CD4-positive, alpha-beta T cell (primary cell): ENCODE measurements at regions of chr6 and their contacts with region 1.

Region 1: GRCh38 chr6:28136585-28137504 is 4.8 kb upstream of the ZKSCAN8 start:
- DNase-seq: peak; percentile 47 to 87 (median 68)
- ATAC-seq: peak; percentile 42
- H3K4me3 ChIP-seq: peak overlapping the region; percentile 79
- H3K4me3 Mint-ChIP-seq: peak overlapping the region; percentile 95
- H3K27ac ChIP-seq: peak overlapping the region; percentile 93 to 99
- H3K27ac Mint-ChIP-seq: peak overlapping the region; percentile 95
- H3K4me1 ChIP-seq: peaks cover 37% of the 10 kb centered on the region
- H3K4me1 Mint-ChIP-seq: peaks cover 76% of the 10 kb centered on the region
- H3K27me3 ChIP-seq: no peaks in the 10 kb centered on the region
- H3K27me3 Mint-ChIP-seq: no peaks in the 10 kb centered on the region
- CTCF ChIP-seq: no peak

Region 2: GRCh38 chr6:27177485-27178406 is 959.1 kb before region 1 on chr6:
- CTCF ChIA-PET with region 1: no interaction called
- POLR2A ChIA-PET with region 1: no interaction called
- intact Hi-C with region 1: no loop called
- DNase-seq: peak; percentile 44 to 90 (median 64)
- ATAC-seq: peak; percentile 64
- H3K4me3 ChIP-seq: peak overlapping the region; percentile 89
- H3K4me3 Mint-ChIP-seq: peak overlapping the region; percentile 99
- H3K27ac ChIP-seq: peak overlapping the region; percentile 27 to 63
- H3K27ac Mint-ChIP-seq: peak overlapping the region; percentile 100
- H3K4me1 ChIP-seq: peaks cover 21% of the 10 kb centered on the region
- H3K4me1 Mint-ChIP-seq: peaks cover 24% of the 10 kb centered on the region
- H3K27me3 ChIP-seq: no peaks in the 10 kb centered on the region
- H3K27me3 Mint-ChIP-seq: peaks cover 24% of the 10 kb centered on the region
- CTCF ChIP-seq: peak; percentile 54

Region 3: GRCh38 chr6:28104392-28105244 is 32.2 kb before region 1 on chr6:
- CTCF ChIA-PET with region 1: interaction called, 11 read pairs
- POLR2A ChIA-PET with region 1: interaction called, 55 read pairs
- intact Hi-C with region 1: loop called (anchors 2 kb)
- DNase-seq: peak; percentile 69 to 92 (median 82)
- ATAC-seq: peak; percentile 98
- H3K4me3 ChIP-seq: peak overlapping the region; percentile 74
- H3K4me3 Mint-ChIP-seq: peak overlapping the region; percentile 94
- H3K27ac ChIP-seq: peak overlapping the region; percentile 63 to 78
- H3K27ac Mint-ChIP-seq: peak overlapping the region; percentile 91
- H3K4me1 ChIP-seq: peaks cover 10% of the 10 kb centered on the region
- H3K4me1 Mint-ChIP-seq: peaks cover 13% of the 10 kb centered on the region
- H3K27me3 ChIP-seq: no peaks in the 10 kb centered on the region
- H3K27me3 Mint-ChIP-seq: peaks cover under 1% of the 10 kb centered on the region
- CTCF ChIP-seq: peak; percentile 62

Region 4: DNA sequence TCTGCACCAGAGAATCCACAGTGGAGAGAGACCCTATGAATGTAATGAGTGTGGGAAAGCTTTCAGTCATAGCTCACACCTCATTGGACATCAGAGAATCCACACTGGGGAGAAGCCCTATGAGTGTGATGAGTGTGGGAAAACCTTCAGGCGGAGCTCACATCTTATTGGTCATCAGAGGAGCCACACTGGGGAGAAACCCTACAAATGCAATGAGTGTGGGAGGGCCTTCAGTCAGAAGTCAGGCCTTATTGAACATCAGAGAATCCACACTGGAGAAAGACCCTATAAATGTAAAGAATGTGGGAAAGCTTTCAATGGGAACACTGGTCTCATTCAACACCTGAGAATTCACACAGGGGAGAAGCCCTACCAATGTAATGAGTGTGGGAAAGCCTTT is 16.7 kb after region 1 on chr6:
- CTCF ChIA-PET with region 1: no interaction called
- POLR2A ChIA-PET with region 1: interaction called, 12 read pairs
- intact Hi-C with region 1: no loop called
- DNase-seq: no peak
- ATAC-seq: no peak
- H3K4me3 ChIP-seq: no peak overlapping the region
- H3K4me3 Mint-ChIP-seq: no peak overlapping the region
- H3K27ac ChIP-seq: no peak overlapping the region
- H3K27ac Mint-ChIP-seq: no peak overlapping the region
- H3K4me1 ChIP-seq: no peaks in the 10 kb centered on the region
- H3K4me1 Mint-ChIP-seq: peaks cover 5% of the 10 kb centered on the region
- H3K27me3 ChIP-seq: no peaks in the 10 kb centered on the region
- H3K27me3 Mint-ChIP-seq: no peaks in the 10 kb centered on the region
- CTCF ChIP-seq: no peak

Region 5: GRCh38 chr6:28182255-28182654 is 45.4 kb after region 1 on chr6:
- CTCF ChIA-PET with region 1: no interaction called
- POLR2A ChIA-PET with region 1: no interaction called
- intact Hi-C with region 1: no loop called
- DNase-seq: no peak
- ATAC-seq: no peak
- H3K4me3 ChIP-seq: no peak overlapping the region
- H3K4me3 Mint-ChIP-seq: no peak overlapping the region
- H3K27ac ChIP-seq: no peak overlapping the region
- H3K27ac Mint-ChIP-seq: no peak overlapping the region
- H3K4me1 ChIP-seq: no peaks in the 10 kb centered on the region
- H3K4me1 Mint-ChIP-seq: no peaks in the 10 kb centered on the region
- H3K27me3 ChIP-seq: peaks cover 0 to 16% of the 10 kb centered on the region in 2 experiments
- H3K27me3 Mint-ChIP-seq: peaks cover 33% of the 10 kb centered on the region
- CTCF ChIP-seq: no peak

Region 6: DNA sequence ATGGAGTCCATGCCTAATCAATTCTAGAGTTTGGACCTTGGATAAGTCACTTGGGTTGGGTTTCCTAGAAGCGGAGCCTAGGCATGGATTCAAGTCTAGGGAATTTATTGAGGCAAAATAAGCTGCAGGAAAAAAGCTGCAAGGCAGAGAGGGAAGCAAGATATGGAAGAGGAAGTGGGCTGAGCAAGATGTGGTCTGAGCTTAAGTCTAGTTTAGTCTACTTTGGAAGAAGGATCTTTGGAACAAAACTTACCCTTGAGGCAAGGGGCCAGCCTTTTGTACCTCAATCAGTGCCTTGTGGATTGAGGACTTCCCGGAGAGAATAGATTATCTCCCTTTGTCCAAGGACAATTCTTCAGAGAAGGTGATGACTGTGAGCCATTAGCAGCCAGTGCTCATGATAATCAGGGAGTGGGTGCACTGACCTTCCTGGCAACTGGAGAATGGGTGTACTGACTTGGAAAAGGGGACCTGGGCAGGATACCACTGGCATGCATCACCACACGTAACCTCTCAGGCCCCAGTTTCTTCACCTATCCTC is 99.1 kb after region 1 on chr6:
- CTCF ChIA-PET with region 1: no interaction called
- POLR2A ChIA-PET with region 1: no interaction called
- intact Hi-C with region 1: no loop called
- DNase-seq: no peak
- ATAC-seq: no peak
- H3K4me3 ChIP-seq: no peak overlapping the region
- H3K4me3 Mint-ChIP-seq: no peak overlapping the region
- H3K27ac ChIP-seq: no peak overlapping the region
- H3K27ac Mint-ChIP-seq: no peak overlapping the region
- H3K4me1 ChIP-seq: no peaks in the 10 kb centered on the region
- H3K4me1 Mint-ChIP-seq: no peaks in the 10 kb centered on the region
- H3K27me3 ChIP-seq: no peaks in the 10 kb centered on the region
- H3K27me3 Mint-ChIP-seq: peaks cover 18% of the 10 kb centered on the region
- CTCF ChIP-seq: no peak

Region 7: GRCh38 chr6:28266962-28267694 is 130.3 kb after region 1 on chr6 and contains the start of gene ZSCAN26:
- CTCF ChIA-PET with region 1: no interaction called
- POLR2A ChIA-PET with region 1: interaction called, 33 read pairs
- intact Hi-C with region 1: loop called in 1 of 2 experiments (anchors 5 kb)
- DNase-seq: peak; percentile 78 to 93 (median 85)
- ATAC-seq: peak; percentile 95
- H3K4me3 ChIP-seq: peak within 1 kb of the TSS; percentile 70
- H3K4me3 Mint-ChIP-seq: no peak within 1 kb of the TSS
- H3K27ac ChIP-seq: peak within 1 kb of the TSS; percentile 51 to 80
- H3K27ac Mint-ChIP-seq: no peak within 1 kb of the TSS
- H3K4me1 ChIP-seq: peaks cover 8% of the 10 kb centered on the region
- H3K4me1 Mint-ChIP-seq: peaks cover 19% of the 10 kb centered on the region
- H3K27me3 ChIP-seq: no peaks in the 10 kb centered on the region
- H3K27me3 Mint-ChIP-seq: peaks cover 2% of the 10 kb centered on the region
- CTCF ChIP-seq: no peak
- total RNA-seq, gene ZSCAN26: 6.2 to 8.0 TPM

Region 8: GRCh38 chr6:28355743-28356665 is 219.2 kb after region 1 on chr6:
- CTCF ChIA-PET with region 1: interaction called, 18 read pairs
- POLR2A ChIA-PET with region 1: interaction called, 15 read pairs
- intact Hi-C with region 1: loop called (anchors 1 to 2 kb)
- DNase-seq: peak; percentile 26 to 84 (median 42)
- ATAC-seq: peak; percentile 93
- H3K4me3 ChIP-seq: peak overlapping the region; percentile 64
- H3K4me3 Mint-ChIP-seq: peak overlapping the region; percentile 90
- H3K27ac ChIP-seq: no peak overlapping the region
- H3K27ac Mint-ChIP-seq: peak overlapping the region; percentile 22
- H3K4me1 ChIP-seq: peaks cover 21% of the 10 kb centered on the region
- H3K4me1 Mint-ChIP-seq: peaks cover 42% of the 10 kb centered on the region
- H3K27me3 ChIP-seq: no peaks in the 10 kb centered on the region
- H3K27me3 Mint-ChIP-seq: no peaks in the 10 kb centered on the region
- CTCF ChIP-seq: peak; percentile 77

Region 9: GRCh38 chr6:28433119-28433518 is 296.3 kb after region 1 on chr6:
- CTCF ChIA-PET with region 1: no interaction called
- POLR2A ChIA-PET with region 1: no interaction called
- intact Hi-C with region 1: no loop called
- DNase-seq: no peak
- ATAC-seq: no peak
- H3K4me3 ChIP-seq: no peak overlapping the region
- H3K4me3 Mint-ChIP-seq: no peak overlapping the region
- H3K27ac ChIP-seq: no peak overlapping the region
- H3K27ac Mint-ChIP-seq: no peak overlapping the region
- H3K4me1 ChIP-seq: no peaks in the 10 kb centered on the region
- H3K4me1 Mint-ChIP-seq: no peaks in the 10 kb centered on the region
- H3K27me3 ChIP-seq: no peaks in the 10 kb centered on the region
- H3K27me3 Mint-ChIP-seq: no peaks in the 10 kb centered on the region
- CTCF ChIP-seq: no peak

Region 10: GRCh38 chr6:28683944-28684538 is 547.2 kb after region 1 on chr6:
- CTCF ChIA-PET with region 1: no interaction called
- POLR2A ChIA-PET with region 1: no interaction called
- intact Hi-C with region 1: loop called in 1 of 2 experiments (anchors 10 kb)
- DNase-seq: peak in 6 of 14 experiments; percentile 0 to 65 (median 33)
- ATAC-seq: peak; percentile 69
- H3K4me3 ChIP-seq: no peak overlapping the region
- H3K4me3 Mint-ChIP-seq: no peak overlapping the region
- H3K27ac ChIP-seq: no peak overlapping the region
- H3K27ac Mint-ChIP-seq: no peak overlapping the region
- H3K4me1 ChIP-seq: peaks cover 4% of the 10 kb centered on the region
- H3K4me1 Mint-ChIP-seq: peaks cover 12% of the 10 kb centered on the region
- H3K27me3 ChIP-seq: peaks cover 21 to 48% of the 10 kb centered on the region in 2 experiments
- H3K27me3 Mint-ChIP-seq: peaks cover 87% of the 10 kb centered on the region
- CTCF ChIP-seq: peak; percentile 65